ENCODE measurements at regions of chr3 and their contacts with region 1.

Region 1: DNA sequence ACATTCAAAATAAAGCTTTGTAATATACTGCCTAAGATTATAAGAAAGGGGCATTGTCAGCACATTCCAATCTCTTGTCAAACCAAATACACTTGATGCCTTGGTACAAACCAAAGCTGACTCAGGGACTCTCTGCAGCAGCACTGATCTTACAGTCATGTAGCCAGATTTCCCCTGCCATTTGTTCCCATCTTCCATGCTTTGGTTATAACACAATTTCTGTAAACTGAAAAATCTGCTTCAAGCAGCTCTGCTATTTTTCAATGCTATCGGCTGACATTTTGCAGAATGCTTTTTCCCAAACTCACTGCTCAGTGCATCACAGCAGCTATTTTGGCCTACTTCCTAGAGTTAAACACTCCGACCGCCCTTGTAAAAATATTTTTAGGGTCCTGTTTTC is 18.2 kb downstream of the PLOD2 start:
- DNase-seq: peak; percentile 80
- ATAC-seq: peak; percentile 80
- H3K4me3 ChIP-seq: no peak overlapping the region
- H3K27ac ChIP-seq: no peak overlapping the region
- H3K4me1 ChIP-seq: peaks cover 17% of the 10 kb centered on the region
- H3K27me3 ChIP-seq: no peaks in the 10 kb centered on the region
- CTCF ChIP-seq: no peak
- POLR2A ChIP-seq: no peak
- RAD21 ChIP-seq: no peak

Region 2: DNA sequence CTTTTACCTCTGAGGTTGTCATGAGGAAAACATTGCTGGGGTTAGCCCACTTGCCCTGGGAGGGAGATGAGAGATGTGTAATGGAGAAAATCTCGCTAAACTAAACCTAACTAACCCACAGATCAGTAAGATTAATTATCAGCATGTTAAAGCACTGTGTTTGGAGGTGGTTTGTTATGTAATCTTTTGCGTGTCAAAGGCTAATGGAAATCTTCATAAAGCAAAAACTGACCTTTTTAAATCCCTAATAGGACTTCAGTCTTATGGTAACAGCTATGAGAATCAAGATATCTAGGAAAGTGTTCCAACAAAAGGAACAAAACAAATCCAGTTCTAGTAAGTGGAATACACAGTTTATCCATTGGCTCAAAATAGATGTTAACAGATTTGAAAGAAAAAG is 84.5 kb before region 1 on chr3:
- CTCF ChIA-PET with region 1: no interaction called
- POLR2A ChIA-PET with region 1: no interaction called
- dilution Hi-C with region 1: no loop called
- in situ Hi-C with region 1: no loop called
- intact Hi-C with region 1: no loop called
- DNase-seq: no peak
- ATAC-seq: no peak
- H3K4me3 ChIP-seq: no peak overlapping the region
- H3K27ac ChIP-seq: no peak overlapping the region
- H3K4me1 ChIP-seq: no peaks in the 10 kb centered on the region
- H3K27me3 ChIP-seq: no peaks in the 10 kb centered on the region
- CTCF ChIP-seq: no peak
- POLR2A ChIP-seq: no peak
- RAD21 ChIP-seq: no peak

Region 3: DNA sequence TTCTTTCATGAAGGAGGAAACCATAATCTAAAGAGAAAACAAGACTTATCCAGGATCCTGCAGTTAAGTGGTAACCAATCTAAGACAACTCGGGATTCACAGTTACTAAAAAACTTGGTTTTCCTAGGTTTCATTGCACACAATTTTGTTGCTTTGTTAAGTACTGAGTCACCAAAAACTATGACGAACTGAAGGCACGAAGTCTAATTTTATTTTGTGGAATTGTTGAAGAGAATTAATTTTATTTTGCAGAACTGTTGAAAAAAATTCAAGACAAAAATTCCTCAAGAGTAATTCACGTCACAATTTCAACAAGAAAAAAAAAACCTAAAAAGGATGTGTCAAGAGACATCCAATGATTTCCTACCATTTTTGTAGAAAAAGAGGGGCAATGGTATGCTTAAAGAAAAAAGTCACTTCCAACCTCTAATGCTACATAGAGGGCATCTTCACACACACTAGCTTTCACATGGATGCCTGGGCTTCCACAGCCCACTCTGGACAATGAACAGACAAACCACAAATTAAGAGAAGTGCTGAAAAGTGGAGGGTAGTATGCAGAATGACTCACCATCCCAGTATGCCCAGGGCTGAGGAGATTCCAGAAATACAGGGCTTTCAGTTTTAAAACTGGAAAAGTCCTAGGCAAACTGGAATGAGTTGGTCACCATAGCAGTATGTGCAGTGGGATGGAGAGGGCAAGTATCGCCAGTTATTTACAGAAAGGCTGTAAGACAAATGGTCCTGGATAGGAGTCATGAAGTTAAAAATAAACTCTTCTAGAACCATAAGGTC is 10.9 kb before region 1 on chr3:
- CTCF ChIA-PET with region 1: no interaction called
- POLR2A ChIA-PET with region 1: interaction called, 3 read pairs
- dilution Hi-C with region 1: no loop called
- in situ Hi-C with region 1: no loop called
- intact Hi-C with region 1: loop called (anchors 1 kb)
- DNase-seq: peak; percentile 91
- ATAC-seq: peak; percentile 96
- H3K4me3 ChIP-seq: no peak overlapping the region
- H3K27ac ChIP-seq: no peak overlapping the region
- H3K4me1 ChIP-seq: peaks cover 9% of the 10 kb centered on the region; the same call in 1 of the 2 replicates
- H3K27me3 ChIP-seq: no peaks in the 10 kb centered on the region
- CTCF ChIP-seq: no peak
- POLR2A ChIP-seq: no peak
- RAD21 ChIP-seq: no peak